HEK293 (cell line): ENCODE measurements at regions of chr10 and their contacts with region 1.

Region 1: GRCh38 chr10:15585303-15585715 is 134.4 kb downstream of the ITGA8 start:
- H3K4me3 ChIP-seq: no peak overlapping the region
- H3K27ac ChIP-seq: no peak overlapping the region
- H3K4me1 ChIP-seq: no peaks in the 10 kb centered on the region
- CTCF ChIP-seq: peak; percentile 64

Region 2: GRCh38 chr10:15472431-15473395 is 112.6 kb before region 1 on chr10:
- CTCF ChIA-PET with region 1: no interaction called
- POLR2A ChIA-PET with region 1: no interaction called
- H3K4me3 ChIP-seq: no peak overlapping the region
- H3K27ac ChIP-seq: peak overlapping the region; percentile 65
- H3K4me1 ChIP-seq: peaks cover 20% of the 10 kb centered on the region
- CTCF ChIP-seq: no peak

Region 3: GRCh38 chr10:15572531-15573045 is 12.7 kb before region 1 on chr10:
- CTCF ChIA-PET with region 1: interaction called, 34 read pairs
- POLR2A ChIA-PET with region 1: no interaction called
- H3K4me3 ChIP-seq: no peak overlapping the region
- H3K27ac ChIP-seq: no peak overlapping the region
- H3K4me1 ChIP-seq: no peaks in the 10 kb centered on the region
- CTCF ChIP-seq: no peak

Region 4: GRCh38 chr10:15609246-15609645 is 23.9 kb after region 1 on chr10:
- CTCF ChIA-PET with region 1: interaction called, 14 read pairs
- POLR2A ChIA-PET with region 1: no interaction called
- H3K4me3 ChIP-seq: no peak overlapping the region
- H3K27ac ChIP-seq: no peak overlapping the region
- H3K4me1 ChIP-seq: peaks cover 5% of the 10 kb centered on the region; the same call in 1 of the 2 replicates
- CTCF ChIP-seq: no peak

Region 5: GRCh38 chr10:15710455-15710854 is 125.1 kb after region 1 on chr10:
- CTCF ChIA-PET with region 1: interaction called, 13 read pairs
- POLR2A ChIA-PET with region 1: no interaction called
- H3K4me3 ChIP-seq: no peak overlapping the region
- H3K27ac ChIP-seq: no peak overlapping the region
- H3K4me1 ChIP-seq: no peaks in the 10 kb centered on the region
- CTCF ChIP-seq: no peak